ENCODE measurements at regions of chr2 and their contacts with region 1.

Region 1: DNA sequence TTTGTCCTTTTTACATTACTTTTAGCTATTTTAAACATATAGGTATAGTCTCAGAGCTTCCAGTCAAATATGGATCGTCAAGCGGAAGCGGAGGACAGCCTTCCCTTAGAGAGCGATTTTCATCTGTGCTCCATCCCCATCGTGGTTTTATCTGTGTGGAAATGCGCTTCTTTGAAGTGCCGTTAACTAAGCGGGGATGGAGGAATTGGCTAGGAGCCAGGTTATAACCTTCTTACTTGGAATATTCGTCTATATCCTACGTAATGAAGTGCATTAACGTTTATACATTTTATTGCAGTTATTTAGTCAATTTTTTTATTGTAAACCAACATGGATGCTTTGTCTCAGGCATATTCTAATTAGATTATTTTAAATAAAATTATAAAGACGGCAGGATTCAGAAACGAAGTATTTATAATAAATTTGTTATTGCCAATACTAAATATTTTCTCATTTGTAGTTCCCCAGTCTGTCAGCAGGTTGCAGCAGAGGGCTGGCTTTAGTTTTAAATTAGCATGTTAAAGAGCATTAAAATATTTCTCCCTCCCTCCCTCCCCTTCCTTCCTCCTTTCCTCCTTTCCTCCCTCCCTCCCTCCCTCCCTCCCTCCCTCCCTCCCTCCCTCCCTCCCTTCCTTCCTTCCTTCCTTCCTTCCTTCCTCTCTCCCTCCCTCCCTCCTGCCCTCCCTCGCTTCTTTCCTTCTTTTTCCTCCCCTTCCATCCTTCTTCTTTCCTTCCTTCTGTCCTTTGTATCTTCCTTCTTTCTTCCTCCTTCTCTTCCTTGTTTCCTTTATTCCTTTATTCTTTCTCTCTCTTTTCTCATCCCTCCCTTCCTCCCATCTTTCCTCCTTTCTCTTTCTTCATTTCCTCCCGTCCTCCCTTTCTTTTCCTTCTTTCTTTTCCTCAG is 80.6 kb upstream of the DOCK10 start:
- DNase-seq: no peak
- H3K4me3 ChIP-seq: no peak overlapping the region
- H3K27ac ChIP-seq: no peak overlapping the region
- H3K4me1 ChIP-seq: no peaks in the 10 kb centered on the region
- H3K27me3 ChIP-seq: no peaks in the 10 kb centered on the region
- CTCF ChIP-seq: peak in 2 of 3 experiments; percentile 18 to 41

Region 2: GRCh38 chr2:224611938-224612337 is 510.9 kb before region 1 on chr2:
- intact Hi-C with region 1: no loop called
- DNase-seq: no peak
- H3K4me3 ChIP-seq: no peak overlapping the region
- H3K27ac ChIP-seq: no peak overlapping the region
- H3K4me1 ChIP-seq: no peaks in the 10 kb centered on the region
- H3K27me3 ChIP-seq: no peaks in the 10 kb centered on the region
- CTCF ChIP-seq: no peak

Region 3: DNA sequence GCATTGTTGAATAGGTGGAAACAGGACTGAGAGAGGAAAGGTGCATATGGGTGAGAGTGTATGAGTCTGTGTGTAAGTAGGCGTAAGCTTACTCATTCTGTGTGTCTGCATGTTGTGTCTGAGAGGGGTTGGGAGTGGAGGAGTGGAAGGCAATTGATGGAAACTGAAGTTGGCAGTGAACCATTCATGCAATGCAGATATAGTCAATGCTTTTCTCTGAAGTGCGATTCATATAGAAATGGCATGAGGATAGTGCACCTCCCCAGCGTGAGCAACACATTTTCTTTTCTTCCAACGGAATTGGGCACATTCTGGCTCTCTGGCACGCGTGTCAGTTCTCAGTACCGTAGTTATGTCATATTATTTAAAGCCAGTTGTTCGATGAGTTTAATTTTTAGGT is 527.2 kb after region 1 on chr2:
- intact Hi-C with region 1: loop called (anchors 10 kb)
- DNase-seq: no peak
- H3K4me3 ChIP-seq: no peak overlapping the region
- H3K27ac ChIP-seq: no peak overlapping the region
- H3K4me1 ChIP-seq: no peaks in the 10 kb centered on the region
- H3K27me3 ChIP-seq: no peaks in the 10 kb centered on the region
- CTCF ChIP-seq: no peak

Measured in ascending aorta (tissue), 2 donors.